Panc1 (cell line): ENCODE measurements at regions of chr5 and their contacts with region 1.

Region 1: GRCh38 chr5:181159286-181159829 is 12.0 kb downstream of the OR2V2 start:
- DNase-seq: no peak
- ATAC-seq: peak; percentile 88
- H3K4me3 ChIP-seq: peak overlapping the region in 1 of 2 experiments; percentile 20; a peak in 1 of 4 replicates
- H3K27ac ChIP-seq: peak overlapping the region; percentile 88
- H3K4me1 ChIP-seq: peaks cover 23% of the 10 kb centered on the region
- H3K27me3 ChIP-seq: no peaks in the 10 kb centered on the region
- CTCF ChIP-seq: peak; percentile 94

Region 2: GRCh38 chr5:181043285-181044092 is 115.9 kb before region 1 on chr5:
- CTCF ChIA-PET with region 1: no interaction called
- POLR2A ChIA-PET with region 1: no interaction called
- in situ Hi-C with region 1: no loop called
- intact Hi-C with region 1: loop called (anchors 5 kb)
- DNase-seq: peak; percentile 15
- ATAC-seq: peak; percentile 80
- H3K4me3 ChIP-seq: no peak overlapping the region
- H3K27ac ChIP-seq: peak overlapping the region; percentile 50; the same call in 1 of the 2 replicates
- H3K4me1 ChIP-seq: peaks cover 23% of the 10 kb centered on the region
- H3K27me3 ChIP-seq: peaks cover 2% of the 10 kb centered on the region; the same call in 1 of the 2 replicates
- CTCF ChIP-seq: peak; percentile 83

Region 3: DNA sequence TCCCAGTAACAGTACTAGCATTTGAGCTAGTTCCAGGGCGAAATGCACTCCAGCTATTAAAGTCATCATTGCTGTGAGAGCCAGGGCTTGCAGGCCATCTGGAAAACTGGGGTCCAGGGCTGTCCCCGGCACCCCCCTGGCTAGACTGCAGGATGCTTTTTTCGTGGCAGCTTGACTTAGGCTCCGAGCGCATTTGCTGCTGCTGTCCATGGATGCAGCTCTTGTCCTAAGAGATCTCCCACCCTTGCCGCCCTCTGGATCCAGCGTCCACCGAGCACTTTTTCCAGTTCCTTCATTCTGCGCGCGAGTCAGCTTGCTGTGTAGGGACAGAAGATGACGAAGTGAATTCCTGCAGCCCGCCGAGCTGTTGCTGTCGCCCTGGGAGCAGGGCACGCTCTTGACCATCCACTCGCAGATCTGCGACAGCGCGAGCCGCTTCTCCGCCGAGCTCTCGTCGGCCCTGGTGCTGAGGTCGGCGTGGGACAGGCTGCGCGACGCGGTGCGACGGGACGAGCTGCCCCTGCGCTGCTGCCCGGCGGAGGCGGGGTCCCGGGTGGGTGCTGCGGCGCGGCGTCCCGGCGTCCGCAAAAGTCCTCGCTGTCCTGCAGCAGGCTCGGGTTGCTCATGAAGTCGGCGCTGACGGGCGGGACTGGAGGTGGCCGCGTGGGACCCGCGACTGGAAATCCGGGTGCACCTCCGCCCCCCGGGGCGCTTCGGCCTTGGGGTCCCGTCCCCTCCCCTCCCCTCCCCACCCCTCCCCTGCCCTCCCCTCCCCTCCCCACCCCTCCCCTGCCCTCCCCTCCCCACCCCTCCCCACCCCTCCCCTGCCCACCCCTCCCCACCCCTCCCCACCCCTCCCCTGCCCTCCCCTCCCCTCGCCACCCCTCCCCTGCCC is 59.0 kb before region 1 on chr5:
- CTCF ChIA-PET with region 1: no interaction called
- POLR2A ChIA-PET with region 1: no interaction called
- in situ Hi-C with region 1: no loop called
- intact Hi-C with region 1: loop called (anchors 10 kb)
- DNase-seq: no peak
- ATAC-seq: no peak
- H3K4me3 ChIP-seq: peak overlapping the region; percentile 24 to 29; a peak in 3 of 4 replicates
- H3K27ac ChIP-seq: peak overlapping the region; percentile 77
- H3K4me1 ChIP-seq: peaks cover 5% of the 10 kb centered on the region
- H3K27me3 ChIP-seq: no peaks in the 10 kb centered on the region
- CTCF ChIP-seq: no peak